ENCODE measurements at regions of chr6 and their contacts with region 1.

Region 1: GRCh38 chr6:5398530-5398929 is 137.2 kb downstream of the FARS2 start:
- DNase-seq: peak; percentile 61
- ATAC-seq: peak; percentile 83
- H3K4me3 ChIP-seq: no peak overlapping the region
- H3K27ac ChIP-seq: no peak overlapping the region
- H3K4me1 ChIP-seq: no peaks in the 10 kb centered on the region
- H3K27me3 ChIP-seq: no peaks in the 10 kb centered on the region
- CTCF ChIP-seq: peak; percentile 56
- POLR2A ChIP-seq: no peak
- RAD21 ChIP-seq: peak; percentile 50

Region 2: DNA sequence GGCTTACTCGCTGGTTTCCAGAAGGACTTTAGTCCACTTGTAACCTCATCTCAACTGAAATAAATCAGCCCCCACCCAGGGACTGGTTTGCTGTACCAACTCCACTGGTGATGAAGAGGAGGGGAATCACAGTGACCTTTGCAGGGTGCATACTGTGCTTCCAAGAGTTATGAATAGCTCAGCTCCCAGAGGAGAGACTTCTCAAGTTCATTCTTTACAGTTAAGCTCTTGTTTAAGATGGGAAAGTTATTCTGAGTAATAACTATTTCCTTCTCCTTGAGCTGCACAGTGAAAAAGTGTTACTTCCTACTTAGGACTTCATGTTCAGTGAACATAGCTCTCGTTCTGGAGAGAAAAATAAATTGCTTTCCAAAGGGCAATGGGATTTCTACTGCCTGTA is 1096.7 kb before region 1 on chr6:
- CTCF ChIA-PET with region 1: no interaction called
- POLR2A ChIA-PET with region 1: no interaction called
- dilution Hi-C with region 1: no loop called
- in situ Hi-C with region 1: loop called (anchors 10 kb)
- intact Hi-C with region 1: no loop called
- DNase-seq: no peak
- ATAC-seq: peak; percentile 60
- H3K4me3 ChIP-seq: no peak overlapping the region
- H3K27ac ChIP-seq: no peak overlapping the region
- H3K4me1 ChIP-seq: peaks cover 3% of the 10 kb centered on the region
- H3K27me3 ChIP-seq: no peaks in the 10 kb centered on the region
- CTCF ChIP-seq: no peak
- POLR2A ChIP-seq: no peak
- RAD21 ChIP-seq: no peak

Region 3: GRCh38 chr6:5053038-5053437 is 345.5 kb before region 1 on chr6:
- CTCF ChIA-PET with region 1: no interaction called
- POLR2A ChIA-PET with region 1: no interaction called
- dilution Hi-C with region 1: no loop called
- in situ Hi-C with region 1: no loop called
- intact Hi-C with region 1: loop called (anchors 1 kb)
- DNase-seq: peak; percentile 71
- ATAC-seq: no peak; the same call in 1 of the 2 replicates
- H3K4me3 ChIP-seq: no peak overlapping the region
- H3K27ac ChIP-seq: peak overlapping the region; percentile 82; the same call in 1 of the 2 replicates
- H3K4me1 ChIP-seq: peaks cover 7% of the 10 kb centered on the region
- H3K27me3 ChIP-seq: no peaks in the 10 kb centered on the region
- CTCF ChIP-seq: no peak
- POLR2A ChIP-seq: no peak
- RAD21 ChIP-seq: no peak

Region 4: DNA sequence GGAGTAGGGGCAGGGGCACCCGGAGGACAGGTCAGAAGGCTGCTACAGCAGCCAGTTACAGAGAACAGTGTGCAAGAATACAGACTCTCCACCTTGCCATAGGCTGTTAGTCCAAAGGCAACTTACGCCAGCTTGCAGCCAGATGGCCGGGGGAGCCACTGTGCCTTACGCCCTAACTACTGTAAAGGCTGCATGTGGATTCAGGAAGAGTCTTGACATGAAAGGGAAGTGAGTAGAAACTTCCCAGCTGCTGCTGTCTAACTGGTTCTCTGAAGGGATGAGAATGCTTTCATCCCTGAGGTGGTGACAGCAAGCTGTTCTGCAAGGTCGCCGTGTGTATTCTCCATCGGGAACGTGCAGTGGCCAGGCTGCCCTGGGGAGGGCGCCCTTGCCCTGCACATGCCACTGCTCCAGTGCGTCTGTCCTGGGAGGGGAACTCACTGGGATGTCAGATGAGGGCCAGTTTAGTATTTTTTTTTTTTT is 183.9 kb before region 1 on chr6:
- CTCF ChIA-PET with region 1: no interaction called
- POLR2A ChIA-PET with region 1: no interaction called
- dilution Hi-C with region 1: no loop called
- in situ Hi-C with region 1: no loop called
- intact Hi-C with region 1: loop called (anchors 2 kb)
- DNase-seq: peak; percentile 78
- ATAC-seq: peak; percentile 78
- H3K4me3 ChIP-seq: no peak overlapping the region
- H3K27ac ChIP-seq: no peak overlapping the region
- H3K4me1 ChIP-seq: peaks cover 8% of the 10 kb centered on the region; the same call in 1 of the 2 replicates
- H3K27me3 ChIP-seq: no peaks in the 10 kb centered on the region
- CTCF ChIP-seq: peak; percentile 69
- POLR2A ChIP-seq: no peak
- RAD21 ChIP-seq: peak; percentile 82

Region 5: GRCh38 chr6:5260661-5261544 is 137.6 kb before region 1 on chr6 and contains the starts of genes FARS2 and LYRM4:
- CTCF ChIA-PET with region 1: no interaction called
- POLR2A ChIA-PET with region 1: no interaction called
- dilution Hi-C with region 1: no loop called
- in situ Hi-C with region 1: no loop called
- intact Hi-C with region 1: loop called (anchors 5 kb)
- DNase-seq: peak; percentile 73
- ATAC-seq: peak; percentile 95
- H3K4me3 ChIP-seq: peak within 1 kb of the TSS; percentile 89
- H3K27ac ChIP-seq: peak within 1 kb of the TSS; percentile 99
- H3K4me1 ChIP-seq: no peaks in the 10 kb centered on the region
- H3K27me3 ChIP-seq: no peaks in the 10 kb centered on the region
- CTCF ChIP-seq: 0 out of 2 replicates have a peak, but pooled peaks have one; percentile 13
- POLR2A ChIP-seq: peak; percentile 45; the same call in 1 of the 2 replicates
- RAD21 ChIP-seq: no peak
- total RNA-seq, gene FARS2: 26.1 and 28.9 TPM in 2 replicates
- total RNA-seq, gene LYRM4: 11.5 and 16.1 TPM in 2 replicates

Region 6: DNA sequence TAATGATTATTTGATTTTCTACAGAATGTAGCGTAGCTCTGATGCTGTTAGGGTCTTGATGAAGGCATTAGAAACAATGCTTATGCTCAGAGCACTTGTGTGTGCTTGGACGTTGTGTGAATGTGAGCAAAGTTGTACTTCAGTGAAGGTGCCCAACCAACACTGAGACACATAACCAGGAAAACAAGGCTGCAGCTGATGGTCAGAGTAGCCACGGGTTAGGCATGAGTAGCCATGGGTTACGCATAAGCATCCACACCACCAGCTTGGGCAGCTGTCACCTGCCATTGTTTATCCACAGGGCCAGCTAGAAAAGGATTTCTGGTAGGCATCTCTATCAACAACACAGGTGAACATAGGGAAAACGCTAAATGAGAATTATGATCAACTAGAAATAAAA is 281.6 kb after region 1 on chr6:
- CTCF ChIA-PET with region 1: no interaction called
- POLR2A ChIA-PET with region 1: interaction called, 13 read pairs
- dilution Hi-C with region 1: no loop called
- in situ Hi-C with region 1: no loop called
- intact Hi-C with region 1: no loop called
- DNase-seq: no peak
- ATAC-seq: no peak
- H3K4me3 ChIP-seq: no peak overlapping the region
- H3K27ac ChIP-seq: no peak overlapping the region
- H3K4me1 ChIP-seq: no peaks in the 10 kb centered on the region
- H3K27me3 ChIP-seq: no peaks in the 10 kb centered on the region
- CTCF ChIP-seq: no peak
- POLR2A ChIP-seq: no peak
- RAD21 ChIP-seq: no peak